ENCODE measurements at regions of chr12 and their contacts with region 1.

Region 1: GRCh38 chr12:86198696-86199444 is 57.3 kb downstream of the MGAT4C start:
- DNase-seq: no peak
- ATAC-seq: no peak
- H3K4me3 ChIP-seq: no peak overlapping the region
- H3K27ac ChIP-seq: no peak overlapping the region
- H3K4me1 ChIP-seq: no peaks in the 10 kb centered on the region
- H3K27me3 ChIP-seq: no peaks in the 10 kb centered on the region
- CTCF ChIP-seq: no peak
- EP300 ChIP-seq: no peak
- POLR2A ChIP-seq: no peak
- RAD21 ChIP-seq: no peak

Region 2: GRCh38 chr12:85979641-85980040 is 219.2 kb before region 1 on chr12:
- CTCF ChIA-PET with region 1: no interaction called
- POLR2A ChIA-PET with region 1: no interaction called
- in situ Hi-C with region 1: no loop called
- intact Hi-C with region 1: loop called (anchors 2 kb)
- DNase-seq: no peak
- ATAC-seq: no peak
- H3K4me3 ChIP-seq: no peak overlapping the region
- H3K27ac ChIP-seq: no peak overlapping the region
- H3K4me1 ChIP-seq: no peaks in the 10 kb centered on the region
- H3K27me3 ChIP-seq: no peaks in the 10 kb centered on the region
- CTCF ChIP-seq: no peak
- EP300 ChIP-seq: no peak
- POLR2A ChIP-seq: no peak
- RAD21 ChIP-seq: no peak